HEK293 (cell line): ENCODE measurements at regions of chr19 and their contacts with region 1.

Region 1: DNA sequence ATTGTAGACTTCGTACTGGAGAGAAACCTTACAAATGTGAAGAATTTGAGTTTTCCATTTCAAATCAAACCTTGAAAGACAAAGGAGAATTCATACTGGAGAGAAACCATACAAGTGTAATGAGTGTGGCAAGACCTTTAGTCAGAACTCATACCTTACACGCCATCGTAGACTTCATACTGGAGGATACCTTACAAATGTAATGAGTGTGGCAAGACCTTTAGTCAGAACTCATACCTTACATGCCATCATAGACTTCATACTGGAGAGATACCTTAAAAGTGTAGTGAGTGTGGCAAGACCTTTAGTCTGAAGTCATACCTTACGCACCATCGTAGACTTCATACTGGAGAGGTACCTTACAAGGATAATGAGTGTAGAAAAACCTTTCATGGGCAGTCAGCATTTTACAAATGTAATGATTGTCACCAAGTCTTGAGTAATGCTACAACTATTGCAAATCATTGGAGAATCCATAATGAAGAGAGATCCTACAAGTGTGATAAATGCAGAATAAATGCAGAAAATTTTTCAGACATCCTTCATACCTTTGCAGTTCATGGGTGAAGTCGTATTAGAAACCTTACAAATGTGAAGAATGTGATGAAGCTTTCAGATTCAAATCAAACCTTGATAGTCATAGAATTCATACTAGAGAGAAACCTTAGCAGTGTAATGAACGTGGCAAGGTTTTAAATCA is 14.7 kb downstream of the ZNF765 start:
- H3K4me3 ChIP-seq: no peak overlapping the region
- H3K27ac ChIP-seq: no peak overlapping the region
- H3K4me1 ChIP-seq: no peaks in the 10 kb centered on the region
- CTCF ChIP-seq: no peak

Region 2: GRCh38 chr19:53294786-53295441 is 114.7 kb before region 1 on chr19:
- CTCF ChIA-PET with region 1: no interaction called
- POLR2A ChIA-PET with region 1: no interaction called
- H3K4me3 ChIP-seq: no peak overlapping the region
- H3K27ac ChIP-seq: no peak overlapping the region
- H3K4me1 ChIP-seq: no peaks in the 10 kb centered on the region
- CTCF ChIP-seq: no peak

Region 3: GRCh38 chr19:53424968-53425597 is 15.4 kb after region 1 on chr19:
- CTCF ChIA-PET with region 1: interaction called, 17 read pairs
- POLR2A ChIA-PET with region 1: no interaction called
- H3K4me3 ChIP-seq: no peak overlapping the region
- H3K27ac ChIP-seq: no peak overlapping the region
- H3K4me1 ChIP-seq: no peaks in the 10 kb centered on the region
- CTCF ChIP-seq: no peak